Gastrocnemius medialis (tissue), 4 donors: ENCODE measurements at regions of chr13 and their contacts with region 1.

Region 1: DNA sequence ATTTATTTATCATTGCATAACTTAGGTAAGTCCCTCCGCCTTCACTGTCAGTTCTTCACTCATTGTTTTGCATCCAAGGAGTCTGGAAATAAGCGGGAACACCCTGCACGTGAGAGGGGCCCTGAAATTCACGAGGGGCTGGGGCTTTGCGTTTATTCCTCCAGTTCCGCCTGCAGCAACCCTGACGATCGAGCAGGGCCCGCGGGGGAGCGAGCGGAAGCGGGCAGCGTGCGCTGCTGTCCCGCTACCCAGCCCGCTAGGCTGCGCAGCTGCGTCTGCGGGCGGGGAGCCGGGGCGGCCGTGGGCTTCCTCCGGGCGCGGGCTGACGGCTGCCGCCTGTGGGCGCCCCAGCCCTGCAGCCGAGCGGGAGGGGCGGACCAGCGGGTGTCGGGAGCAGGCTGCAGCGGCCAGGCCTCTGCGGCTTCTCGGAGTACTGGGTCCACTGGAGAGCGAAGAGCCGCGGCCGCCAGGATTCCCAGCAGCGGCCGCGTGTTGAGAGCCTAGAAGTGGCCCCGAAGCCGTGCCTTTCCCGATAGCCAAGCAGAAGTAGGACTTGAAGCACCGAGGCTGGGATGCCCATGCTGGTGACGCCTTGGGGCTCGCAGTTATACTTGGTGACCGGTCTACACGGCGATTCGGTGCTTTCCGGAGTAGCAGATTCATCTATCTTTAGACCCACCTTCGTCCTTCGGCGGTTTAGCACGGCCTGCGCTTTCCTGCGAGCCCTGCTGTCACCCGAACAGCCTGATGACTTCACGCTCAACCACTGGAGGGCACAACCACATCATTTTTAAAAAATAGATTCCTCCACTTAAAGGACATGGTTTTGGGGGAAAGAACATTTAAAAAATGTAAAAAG is 32.9 kb upstream of the SACS start:
- DNase-seq: peak; percentile 33 to 72
- ATAC-seq: peak; percentile 93 to 94
- H3K4me3 ChIP-seq: peak overlapping the region; percentile 70 to 87 (median 70)
- H3K27ac ChIP-seq: peak overlapping the region; percentile 83 to 90 (median 88)
- H3K4me1 ChIP-seq: peaks cover 13 to 15% of the 10 kb centered on the region in 2 donors
- H3K27me3 ChIP-seq: no peaks in the 10 kb centered on the region
- CTCF ChIP-seq: peak; percentile 63 to 72 (median 67)
- POLR2A ChIP-seq: no peak

Region 2: DNA sequence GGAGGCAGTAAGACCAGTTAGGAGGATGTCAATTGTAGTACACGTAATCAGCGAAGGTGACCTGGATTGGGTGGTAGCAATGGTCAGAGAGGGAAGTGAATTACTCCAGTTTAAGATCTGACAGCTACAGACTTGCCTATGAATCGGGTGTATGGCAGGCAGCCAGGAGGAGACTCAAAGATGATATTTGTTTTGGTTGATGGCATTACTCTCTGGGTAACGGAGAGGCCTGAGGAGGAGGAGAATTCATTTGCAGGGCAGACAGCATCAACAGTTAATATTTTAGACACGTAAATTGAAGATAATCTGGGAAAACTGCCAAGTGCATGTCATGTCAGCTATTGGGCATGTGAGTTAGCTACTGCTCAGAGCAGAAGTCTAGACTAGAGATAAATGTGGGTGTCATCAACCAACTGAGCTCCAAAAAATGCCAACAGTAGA is 176.4 kb before region 1 on chr13:
- in situ Hi-C with region 1: no loop called
- intact Hi-C with region 1: no loop called
- DNase-seq: no peak
- ATAC-seq: no peak
- H3K4me3 ChIP-seq: no peak overlapping the region
- H3K27ac ChIP-seq: peak overlapping the region in 1 of 4 donors; percentile 2
- H3K4me1 ChIP-seq: peaks cover 12 to 22% of the 10 kb centered on the region in 2 donors
- H3K27me3 ChIP-seq: no peaks in the 10 kb centered on the region
- CTCF ChIP-seq: no peak
- POLR2A ChIP-seq: no peak

Region 3: DNA sequence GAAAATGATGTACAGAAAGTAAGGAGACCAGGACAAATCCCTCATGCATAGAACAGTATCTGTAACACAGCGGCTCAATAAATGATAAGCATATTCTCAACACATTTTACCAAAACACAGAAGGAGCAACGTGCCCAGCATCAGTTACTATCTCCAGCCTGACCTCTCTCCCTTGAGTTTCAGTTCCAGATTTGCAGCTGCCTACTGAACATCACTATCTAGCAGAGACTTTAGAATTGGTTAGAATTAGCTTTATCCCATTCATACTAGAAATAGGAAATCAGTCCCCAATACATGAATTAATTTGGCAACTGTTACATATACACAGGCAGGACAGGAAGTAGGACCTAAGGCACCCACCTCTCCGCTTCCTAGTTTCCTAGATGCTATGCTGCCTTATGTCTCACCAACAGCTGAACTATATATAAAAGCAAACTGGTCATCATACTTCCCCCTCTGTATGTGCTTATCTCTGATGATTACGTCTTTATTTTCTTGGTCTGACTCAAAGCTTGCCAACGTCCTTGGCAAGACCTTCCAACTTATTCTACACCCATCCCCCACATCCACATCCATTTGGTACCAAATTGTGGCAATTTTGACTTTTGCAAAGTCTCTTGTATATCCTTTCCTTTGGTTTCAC is 94.0 kb before region 1 on chr13:
- in situ Hi-C with region 1: no loop called
- intact Hi-C with region 1: no loop called
- DNase-seq: no peak
- ATAC-seq: no peak
- H3K4me3 ChIP-seq: no peak overlapping the region
- H3K27ac ChIP-seq: peak overlapping the region in 1 of 4 donors; percentile 16
- H3K4me1 ChIP-seq: peaks cover 32 to 37% of the 10 kb centered on the region in 2 donors
- H3K27me3 ChIP-seq: no peaks in the 10 kb centered on the region
- CTCF ChIP-seq: no peak
- POLR2A ChIP-seq: no peak

Region 4: GRCh38 chr13:23516702-23517101 is 50.3 kb after region 1 on chr13:
- in situ Hi-C with region 1: no loop called
- intact Hi-C with region 1: loop called (anchors 2 kb)
- DNase-seq: no peak
- ATAC-seq: peak; percentile 67 to 96
- H3K4me3 ChIP-seq: no peak overlapping the region
- H3K27ac ChIP-seq: peak overlapping the region; percentile 35 to 67 (median 47)
- H3K4me1 ChIP-seq: peaks cover 44 to 46% of the 10 kb centered on the region in 2 donors
- H3K27me3 ChIP-seq: no peaks in the 10 kb centered on the region
- CTCF ChIP-seq: no peak
- POLR2A ChIP-seq: no peak

Region 5: GRCh38 chr13:23570099-23570920 is 103.9 kb after region 1 on chr13 and contains the start of gene TNFRSF19:
- in situ Hi-C with region 1: loop called in 3 of 4 experiments (anchors 5 to 10 kb)
- intact Hi-C with region 1: loop called (anchors 1 kb)
- DNase-seq: no peak
- ATAC-seq: peak; percentile 53 to 59
- H3K4me3 ChIP-seq: peak within 1 kb of the TSS in 3 of 4 donors; percentile 27 to 43 (median 41)
- H3K27ac ChIP-seq: peak within 1 kb of the TSS; percentile 33 to 76 (median 62)
- H3K4me1 ChIP-seq: peaks cover 0 to 7% of the 10 kb centered on the region in 2 donors
- H3K27me3 ChIP-seq: no peaks in the 10 kb centered on the region
- CTCF ChIP-seq: no peak
- POLR2A ChIP-seq: no peak
- total RNA-seq, gene TNFRSF19: 0.51 to 1.5 (median 1.0) TPM

Region 6: GRCh38 chr13:23673354-23673753 is 207.0 kb after region 1 on chr13:
- in situ Hi-C with region 1: no loop called
- intact Hi-C with region 1: no loop called
- DNase-seq: peak; percentile 33 to 39
- ATAC-seq: peak; percentile 87 to 95
- H3K4me3 ChIP-seq: no peak overlapping the region
- H3K27ac ChIP-seq: peak overlapping the region in 3 of 4 donors; percentile 11 to 44 (median 37)
- H3K4me1 ChIP-seq: peaks cover 19 to 24% of the 10 kb centered on the region in 2 donors
- H3K27me3 ChIP-seq: no peaks in the 10 kb centered on the region
- CTCF ChIP-seq: no peak
- POLR2A ChIP-seq: no peak

Region 7: GRCh38 chr13:23701636-23702035 is 235.3 kb after region 1 on chr13:
- in situ Hi-C with region 1: no loop called
- intact Hi-C with region 1: loop called (anchors 5 kb)
- DNase-seq: peak; percentile 77 to 88
- ATAC-seq: peak; percentile 78 to 87
- H3K4me3 ChIP-seq: no peak overlapping the region
- H3K27ac ChIP-seq: peak overlapping the region in 3 of 4 donors; percentile 48 to 51 (median 49)
- H3K4me1 ChIP-seq: peaks cover 0 to 5% of the 10 kb centered on the region in 2 donors
- H3K27me3 ChIP-seq: no peaks in the 10 kb centered on the region
- CTCF ChIP-seq: no peak
- POLR2A ChIP-seq: no peak

Region 8: GRCh38 chr13:23871616-23872220 is 405.3 kb after region 1 on chr13:
- in situ Hi-C with region 1: loop called (anchors 5 to 10 kb)
- intact Hi-C with region 1: loop called (anchors 1 kb)
- DNase-seq: no peak
- ATAC-seq: peak; percentile 52 to 73
- H3K4me3 ChIP-seq: no peak overlapping the region
- H3K27ac ChIP-seq: no peak overlapping the region
- H3K4me1 ChIP-seq: peaks cover 0 to 9% of the 10 kb centered on the region in 2 donors
- H3K27me3 ChIP-seq: no peaks in the 10 kb centered on the region
- CTCF ChIP-seq: peak; percentile 49 to 73 (median 60)
- POLR2A ChIP-seq: no peak

Region 9: DNA sequence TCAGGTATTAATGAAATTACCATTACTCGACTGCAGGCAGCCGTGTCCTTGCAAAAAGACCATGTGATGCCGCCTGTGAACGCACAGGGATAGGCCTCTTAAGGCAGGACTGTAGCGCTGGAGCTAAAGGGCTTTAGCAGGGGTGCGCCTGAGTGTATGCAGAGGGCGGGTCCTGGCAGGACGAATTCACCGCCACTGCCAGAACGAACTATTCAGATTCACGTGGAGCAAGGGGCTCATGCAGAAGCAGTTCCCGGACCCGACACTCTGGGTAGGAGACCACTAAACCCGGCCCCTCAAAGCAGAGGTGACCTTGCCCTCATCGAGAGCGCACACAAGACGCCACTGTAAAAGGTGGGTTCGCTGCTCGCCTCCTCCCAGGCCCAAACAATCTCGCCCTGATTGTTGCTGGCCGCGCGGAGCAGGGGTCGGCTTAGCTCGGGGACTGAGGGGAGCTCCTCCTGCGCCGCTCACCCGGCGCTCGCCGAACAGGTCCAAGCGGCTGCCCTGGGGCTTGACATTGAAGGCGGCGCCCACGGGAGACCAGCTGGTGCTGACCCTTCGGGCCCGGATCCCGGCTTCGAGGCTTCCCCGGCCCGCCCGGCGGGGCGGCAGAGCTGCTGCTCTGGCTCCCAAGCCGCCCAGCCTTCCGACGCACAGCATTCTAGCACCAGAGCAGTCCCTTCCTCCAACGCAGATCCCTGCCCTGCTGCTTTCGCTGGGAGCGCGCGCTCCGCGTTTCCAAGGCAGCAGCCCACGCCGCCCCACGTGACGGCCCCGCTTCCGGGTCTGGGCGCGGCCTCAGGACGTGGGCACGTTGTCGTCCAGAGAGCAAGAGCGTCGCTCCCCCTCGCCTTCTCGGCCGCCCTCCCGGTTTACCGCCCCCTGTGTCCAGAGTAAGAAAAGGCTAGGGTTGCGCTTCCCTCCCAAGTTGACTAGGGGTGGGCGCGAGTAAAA is 422.6 kb after region 1 on chr13 and contains the start of gene MIPEP:
- in situ Hi-C with region 1: no loop called
- intact Hi-C with region 1: loop called (anchors 1 kb)
- DNase-seq: peak; percentile 83 to 89
- ATAC-seq: peak; percentile 94 to 97
- H3K4me3 ChIP-seq: peak within 1 kb of the TSS; percentile 67 to 99 (median 86)
- H3K27ac ChIP-seq: peak within 1 kb of the TSS; percentile 81 to 88 (median 84)
- H3K4me1 ChIP-seq: peaks cover 7 to 15% of the 10 kb centered on the region in 2 donors
- H3K27me3 ChIP-seq: no peaks in the 10 kb centered on the region
- CTCF ChIP-seq: peak; percentile 54 to 83 (median 71)
- POLR2A ChIP-seq: peak; percentile 73 to 79
- total RNA-seq, gene MIPEP: 9.2 to 23.1 (median 14.0) TPM